PC-9 (cell line): ENCODE measurements at regions of chr11 and their contacts with region 1.

Region 1: GRCh38 chr11:65141896-65142494 is 7.7 kb upstream of the SYVN1 start:
- DNase-seq: no peak
- H3K4me3 ChIP-seq: no peak overlapping the region
- H3K27ac ChIP-seq: no peak overlapping the region
- H3K4me1 ChIP-seq: no peaks in the 10 kb centered on the region
- H3K27me3 ChIP-seq: no peaks in the 10 kb centered on the region
- CTCF ChIP-seq: no peak

Region 2: DNA sequence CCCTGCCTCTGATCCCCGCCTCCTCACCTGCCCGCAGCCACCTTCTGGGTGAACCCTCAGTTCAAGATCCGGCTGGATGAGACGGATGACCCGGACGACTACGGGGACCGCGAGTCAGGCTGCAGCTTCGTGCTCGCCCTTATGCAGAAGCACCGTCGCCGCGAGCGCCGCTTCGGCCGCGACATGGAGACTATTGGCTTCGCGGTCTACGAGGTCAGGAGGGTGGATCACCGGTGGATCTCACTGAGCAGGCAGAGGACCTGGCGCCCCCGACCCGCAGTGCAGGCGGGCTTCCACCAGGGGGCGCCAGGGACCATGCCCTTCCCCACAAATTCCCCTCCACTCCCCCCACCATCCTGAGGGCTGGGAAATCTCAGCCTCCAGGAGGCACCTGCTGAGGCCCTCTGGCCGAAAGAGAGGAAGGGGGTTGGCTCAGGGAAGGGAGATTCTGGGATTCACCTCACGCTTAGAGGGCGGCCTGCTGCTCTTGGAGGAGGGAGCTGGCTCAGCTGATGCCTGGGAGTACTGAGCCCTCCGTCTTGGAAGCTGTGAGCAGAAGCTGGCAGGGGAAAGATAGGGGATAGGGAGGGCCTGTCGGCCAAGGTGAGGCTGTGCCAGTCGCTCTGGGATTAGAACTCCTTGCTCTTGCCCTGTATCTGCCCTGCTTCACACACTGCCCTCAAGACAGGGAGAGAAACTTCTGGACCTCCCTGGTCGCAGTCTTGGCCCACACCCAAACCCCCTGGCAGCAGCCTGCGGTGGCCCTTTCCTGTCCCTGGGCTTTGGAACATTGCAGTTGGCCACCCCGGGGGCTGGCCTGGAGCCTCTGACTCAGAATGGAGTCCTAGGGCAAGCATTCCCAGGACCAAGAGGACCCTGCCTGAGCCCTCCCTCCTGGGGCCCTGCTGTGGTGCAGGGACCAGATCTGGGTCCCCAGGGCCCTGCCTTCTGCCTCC is 62.9 kb after region 1 on chr11:
- CTCF ChIA-PET with region 1: no interaction called
- POLR2A ChIA-PET with region 1: interaction called, 10 read pairs
- intact Hi-C with region 1: no loop called
- DNase-seq: peak in 1 of 2 experiments; percentile 57
- H3K4me3 ChIP-seq: no peak overlapping the region
- H3K27ac ChIP-seq: peak overlapping the region; percentile 72
- H3K4me1 ChIP-seq: peaks cover 70% of the 10 kb centered on the region
- H3K27me3 ChIP-seq: no peaks in the 10 kb centered on the region
- CTCF ChIP-seq: peak; percentile 99